ENCODE measurements at regions of chr7 and their contacts with region 1.

Region 1: DNA sequence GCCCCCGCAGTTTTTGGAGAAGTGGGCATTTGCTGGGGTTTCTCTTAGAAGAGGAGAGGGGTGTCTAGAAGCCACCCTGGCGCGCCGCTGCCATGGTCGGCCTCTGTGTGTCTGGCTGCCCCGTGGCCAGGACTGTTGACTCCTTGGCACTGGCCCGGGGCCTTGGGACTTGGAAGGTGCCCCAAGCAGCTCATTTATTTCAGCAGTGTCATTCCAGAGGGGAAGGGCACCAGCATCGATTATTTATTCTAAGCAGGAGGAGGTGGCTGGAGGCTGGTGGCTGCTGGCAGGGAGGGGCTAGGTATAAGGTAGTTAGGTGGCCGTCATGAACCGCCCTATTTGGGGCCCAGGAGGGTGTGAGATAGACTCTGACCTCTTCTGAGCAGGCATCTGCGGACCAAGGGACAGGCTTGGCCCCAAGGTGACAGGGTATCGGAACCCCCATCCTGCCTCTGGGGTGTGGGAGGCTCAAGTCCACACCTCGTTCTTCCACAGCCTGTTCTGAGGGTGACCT is 1.6 kb downstream of the GTF2IRD1 start:
- DNase-seq: no peak
- H3K4me3 ChIP-seq: peak overlapping the region; percentile 69 to 90
- H3K27ac ChIP-seq: peak overlapping the region; percentile 65 to 79
- H3K4me1 ChIP-seq: peaks cover 0 to 16% of the 10 kb centered on the region in 2 donors
- H3K27me3 ChIP-seq: no peaks in the 10 kb centered on the region
- CTCF ChIP-seq: no peak

Region 2: GRCh38 chr7:74443543-74444247 is 11.7 kb before region 1 on chr7:
- intact Hi-C with region 1: no loop called
- DNase-seq: no peak
- H3K4me3 ChIP-seq: no peak overlapping the region
- H3K27ac ChIP-seq: no peak overlapping the region
- H3K4me1 ChIP-seq: no peaks in the 10 kb centered on the region
- H3K27me3 ChIP-seq: no peaks in the 10 kb centered on the region
- CTCF ChIP-seq: no peak

Region 3: GRCh38 chr7:74479961-74480829 is 24.8 kb after region 1 on chr7:
- intact Hi-C with region 1: loop called (anchors 1 kb)
- DNase-seq: peak; percentile 59 to 94
- H3K4me3 ChIP-seq: peak overlapping the region; percentile 45 to 57
- H3K27ac ChIP-seq: peak overlapping the region; percentile 90 to 95
- H3K4me1 ChIP-seq: peaks cover 25 to 44% of the 10 kb centered on the region in 2 donors
- H3K27me3 ChIP-seq: no peaks in the 10 kb centered on the region
- CTCF ChIP-seq: no peak

Measured in ascending aorta (tissue), 2 donors.